Heart right ventricle (tissue), 16 donors: ENCODE measurements at regions of chr3 and their contacts with region 1.

Region 1: GRCh38 chr3:9749645-9750555 is at the start of gene OGG1:
- DNase-seq: peak; percentile 98
- ATAC-seq: peak; percentile 97 to 99 (median 98)
- H3K4me3 ChIP-seq: peak within 1 kb of the TSS; percentile 54 to 80 (median 66)
- H3K27ac ChIP-seq: peak within 1 kb of the TSS; percentile 70 to 95 (median 91)
- H3K4me1 ChIP-seq: peaks cover 2 to 37% (median 30%) of the 10 kb centered on the region in 9 donors
- H3K27me3 ChIP-seq: no peaks in the 10 kb centered on the region
- CTCF ChIP-seq: peak in 4 of 9 donors; percentile 7 to 34 (median 20)
- total RNA-seq, gene OGG1: 5.2 to 10.8 (median 8.0) TPM

Region 2: GRCh38 chr3:9503283-9503682 is 246.6 kb before region 1 on chr3:
- intact Hi-C with region 1: loop called in 1 of 10 experiments (anchors 10 kb)
- DNase-seq: peak; percentile 38 to 60
- ATAC-seq: peak in 4 of 8 donors; percentile 23 to 35 (median 33)
- H3K4me3 ChIP-seq: no peak overlapping the region
- H3K27ac ChIP-seq: no peak overlapping the region
- H3K4me1 ChIP-seq: peaks cover 0 to 14% (median 10%) of the 10 kb centered on the region in 9 donors
- H3K27me3 ChIP-seq: peaks cover 0 to 44% (median 27%) of the 10 kb centered on the region in 7 donors
- CTCF ChIP-seq: peak; percentile 68 to 92 (median 86)

Region 3: DNA sequence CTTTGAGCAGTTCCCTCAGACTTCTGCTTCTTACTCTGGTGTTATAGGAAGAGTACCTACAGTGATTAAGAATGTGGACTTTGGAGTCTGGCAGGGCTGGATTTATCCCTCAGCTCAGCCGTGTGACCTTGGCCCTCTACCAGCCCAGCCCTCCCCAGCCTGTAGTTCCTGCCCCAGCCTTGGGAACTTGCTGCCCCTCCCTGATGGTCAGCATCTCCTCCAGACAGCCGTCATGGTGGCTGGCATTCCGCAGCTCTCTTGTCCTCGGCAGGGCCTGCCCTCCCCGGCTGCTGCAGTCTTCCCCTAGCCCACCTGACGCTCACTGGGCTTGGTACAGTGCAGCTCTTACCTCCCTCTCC is 68.2 kb before region 1 on chr3:
- intact Hi-C with region 1: no loop called
- DNase-seq: no peak
- ATAC-seq: peak in 4 of 8 donors; percentile 32 to 55 (median 42)
- H3K4me3 ChIP-seq: no peak overlapping the region
- H3K27ac ChIP-seq: no peak overlapping the region
- H3K4me1 ChIP-seq: peaks cover 0 to 32% (median 10%) of the 10 kb centered on the region in 9 donors
- H3K27me3 ChIP-seq: no peaks in the 10 kb centered on the region
- CTCF ChIP-seq: no peak

Region 4: DNA sequence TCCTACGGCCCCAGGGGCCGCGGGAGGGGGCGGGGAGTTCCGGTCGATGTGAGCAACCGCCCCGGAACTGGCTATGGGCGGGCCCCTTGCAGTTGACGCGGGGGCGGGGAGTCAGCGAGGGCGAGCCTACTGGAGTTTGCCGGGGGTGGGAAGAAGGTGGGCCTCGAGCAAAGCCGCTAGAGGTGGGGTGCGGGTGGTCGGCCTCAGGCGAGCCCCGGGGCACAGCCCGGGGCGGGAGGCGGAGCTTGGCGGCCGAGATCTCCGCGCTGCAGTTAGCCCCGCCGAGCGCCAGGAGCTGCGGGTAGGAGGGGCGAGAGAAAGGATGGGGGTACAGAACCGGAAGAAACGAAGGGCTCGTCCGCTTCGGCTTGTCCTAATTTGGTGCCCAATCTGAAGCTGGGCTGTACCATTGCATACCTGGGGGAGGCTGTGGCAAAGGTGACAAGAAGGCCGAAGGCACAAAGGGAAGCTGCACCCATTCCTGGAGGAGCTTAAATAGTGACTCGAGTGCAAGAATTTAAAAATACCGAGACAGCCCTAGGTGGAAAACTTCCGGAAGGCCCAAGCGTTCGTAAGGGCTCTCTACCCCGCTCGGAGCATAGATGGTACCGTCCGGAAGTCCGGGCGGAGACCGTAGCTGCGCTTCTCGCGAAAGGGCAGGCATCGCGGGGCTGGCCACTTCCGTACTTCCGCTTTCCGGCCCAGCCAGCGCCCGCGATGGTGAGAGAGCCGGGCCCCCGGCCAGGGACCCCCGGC is 42.7 kb after region 1 on chr3 and contains the starts of genes ARPC4 and TADA3:
- intact Hi-C with region 1: loop called in 3 of 10 experiments (anchors 2 to 5 kb)
- DNase-seq: peak; percentile 94
- ATAC-seq: peak; percentile 93 to 97 (median 94)
- H3K4me3 ChIP-seq: peak within 1 kb of the TSS; percentile 63 to 100 (median 80)
- H3K27ac ChIP-seq: peak within 1 kb of the TSS; percentile 91 to 98 (median 97)
- H3K4me1 ChIP-seq: peaks cover 5 to 51% (median 35%) of the 10 kb centered on the region in 9 donors
- H3K27me3 ChIP-seq: no peaks in the 10 kb centered on the region
- CTCF ChIP-seq: peak in 1 of 9 donors; percentile 20
- total RNA-seq, gene ARPC4: 40.6 to 111 (median 55.0) TPM
- total RNA-seq, gene TADA3: 38.5 to 59.6 (median 42.9) TPM